Right lobe of liver (tissue), 6 donors: ENCODE measurements at regions of chr4 and their contacts with region 1.

Region 1: DNA sequence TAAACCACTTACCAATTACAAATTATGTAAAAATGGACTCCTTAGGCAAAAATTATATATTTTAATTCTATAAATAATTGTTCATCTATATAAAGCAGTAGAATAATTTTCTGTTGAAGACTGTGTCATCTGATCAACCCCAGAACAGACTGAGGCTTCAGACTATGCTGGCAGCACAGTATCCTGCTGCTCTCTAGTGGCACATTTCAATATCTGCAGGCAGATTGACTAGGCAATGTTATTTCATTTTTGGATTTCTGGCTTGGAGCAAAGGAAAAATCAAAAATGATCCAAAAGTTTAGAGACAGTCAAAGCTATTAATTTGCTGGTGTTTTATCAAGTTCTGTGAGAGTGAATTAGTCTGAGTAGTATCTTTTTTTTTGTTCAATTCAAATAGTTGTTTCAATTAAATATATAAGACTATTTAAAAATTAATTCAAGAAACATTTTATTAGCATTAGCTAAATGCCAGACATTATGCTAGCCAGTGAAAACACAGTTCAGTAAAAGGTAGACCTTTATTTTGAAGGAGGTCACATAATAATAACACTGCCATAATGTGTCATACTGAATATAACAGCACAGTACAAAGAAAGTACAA is 21.3 kb upstream of the SULT1E1 start:
- DNase-seq: peak in 2 of 3 donors; percentile 17 to 52
- ATAC-seq: peak; percentile 98 to 99 (median 98)
- H3K4me3 ChIP-seq: no peak overlapping the region
- H3K27ac ChIP-seq: no peak overlapping the region
- H3K4me1 ChIP-seq: peaks cover 0 to 9% (median 0%) of the 10 kb centered on the region in 4 donors
- H3K27me3 ChIP-seq: no peaks in the 10 kb centered on the region
- CTCF ChIP-seq: peak; percentile 90 to 97 (median 92)
- POLR2A ChIP-seq: no peak

Region 2: DNA sequence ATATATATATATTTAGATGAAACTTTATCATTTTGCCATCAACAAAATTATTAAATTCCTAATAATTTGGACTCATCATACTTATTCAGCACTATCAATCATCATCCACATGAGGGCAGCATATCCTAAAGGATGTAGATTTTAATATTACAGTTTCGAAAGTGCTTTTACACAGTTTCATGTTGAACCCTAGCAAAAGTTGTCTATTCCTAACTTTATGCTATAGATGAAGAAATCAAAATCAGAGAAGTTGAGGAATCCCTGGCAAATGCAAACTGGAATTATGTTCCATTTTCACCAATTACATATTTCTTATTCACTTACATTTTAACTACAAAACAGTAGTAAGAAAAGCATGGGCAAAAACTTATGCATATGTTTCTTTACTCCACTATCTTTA is 191.7 kb before region 1 on chr4:
- intact Hi-C with region 1: loop called (anchors 10 kb)
- DNase-seq: no peak
- ATAC-seq: peak; percentile 77 to 89 (median 88)
- H3K4me3 ChIP-seq: no peak overlapping the region
- H3K27ac ChIP-seq: no peak overlapping the region
- H3K4me1 ChIP-seq: no peaks in the 10 kb centered on the region
- H3K27me3 ChIP-seq: no peaks in the 10 kb centered on the region
- CTCF ChIP-seq: peak; percentile 55 to 76 (median 68)
- POLR2A ChIP-seq: no peak

Region 3: DNA sequence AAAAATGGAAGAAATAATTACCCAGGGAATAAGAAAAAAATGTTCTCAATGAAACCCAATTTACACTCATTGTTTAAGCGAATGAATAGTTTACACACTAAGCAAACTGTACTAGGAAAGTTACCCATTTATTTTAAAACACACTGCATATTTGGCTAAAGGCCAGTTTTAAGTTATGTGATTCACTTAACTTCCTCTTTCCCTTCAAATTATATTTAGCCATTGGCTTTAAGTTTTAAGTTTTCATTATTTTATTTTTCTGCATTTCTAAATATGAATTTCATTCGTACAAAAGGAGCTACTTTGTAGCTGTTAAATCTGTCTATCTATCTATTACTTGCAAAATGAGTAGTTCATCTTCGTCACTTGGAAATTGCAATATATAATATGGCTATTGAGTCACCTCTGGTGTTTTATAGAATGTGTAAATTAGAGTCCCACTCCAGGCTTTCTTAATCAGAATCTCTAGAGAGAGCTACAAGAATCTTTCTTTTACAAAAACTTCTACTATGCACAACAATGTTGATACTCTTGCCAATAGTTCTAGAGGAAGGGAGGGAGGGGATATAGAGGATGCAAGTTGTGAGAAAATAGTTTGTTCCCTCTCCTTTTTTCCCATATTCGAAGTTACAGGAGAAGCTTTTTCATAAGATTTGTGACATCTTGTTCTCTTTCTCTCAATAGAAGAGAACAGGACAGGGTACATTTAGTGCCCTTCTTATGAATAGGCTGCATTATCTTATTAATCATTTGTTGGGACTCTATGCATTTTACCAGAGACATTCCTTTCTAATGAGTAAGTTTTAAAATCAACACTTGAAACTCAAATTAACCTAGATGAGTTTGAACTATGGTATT is 162.6 kb before region 1 on chr4:
- intact Hi-C with region 1: no loop called
- DNase-seq: no peak
- ATAC-seq: peak in 2 of 4 donors; percentile 18 to 41
- H3K4me3 ChIP-seq: no peak overlapping the region
- H3K27ac ChIP-seq: peak overlapping the region in 1 of 3 donors; percentile 0
- H3K4me1 ChIP-seq: peaks cover 0 to 17% (median 0%) of the 10 kb centered on the region in 4 donors
- H3K27me3 ChIP-seq: no peaks in the 10 kb centered on the region
- CTCF ChIP-seq: no peak
- POLR2A ChIP-seq: no peak

Region 4: DNA sequence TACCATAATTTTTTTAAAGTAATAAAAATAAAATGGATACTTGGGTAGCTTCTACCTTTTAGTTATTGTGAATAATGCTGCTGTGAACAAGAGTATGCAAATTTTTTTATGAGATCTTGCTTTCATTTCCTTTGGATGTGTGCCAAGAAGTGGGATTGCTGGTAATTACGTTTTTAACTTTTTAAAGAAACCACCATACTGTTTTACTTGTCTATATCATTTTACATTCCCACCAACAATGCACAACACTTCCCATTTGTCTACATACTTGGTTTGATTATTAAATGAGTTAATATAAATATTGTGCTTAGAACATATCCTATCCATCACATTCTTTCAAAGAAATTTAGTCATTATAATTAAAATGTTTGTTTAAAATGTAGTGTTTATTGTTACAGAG is 117.0 kb before region 1 on chr4:
- intact Hi-C with region 1: no loop called
- DNase-seq: no peak
- ATAC-seq: no peak
- H3K4me3 ChIP-seq: no peak overlapping the region
- H3K27ac ChIP-seq: no peak overlapping the region
- H3K4me1 ChIP-seq: peaks cover 0 to 10% (median 5%) of the 10 kb centered on the region in 4 donors
- H3K27me3 ChIP-seq: no peaks in the 10 kb centered on the region
- CTCF ChIP-seq: no peak
- POLR2A ChIP-seq: no peak